Naive thymus-derived CD4-positive, alpha-beta T cell (primary cell): ENCODE measurements at regions of chr2 and their contacts with region 1.

Region 1: DNA sequence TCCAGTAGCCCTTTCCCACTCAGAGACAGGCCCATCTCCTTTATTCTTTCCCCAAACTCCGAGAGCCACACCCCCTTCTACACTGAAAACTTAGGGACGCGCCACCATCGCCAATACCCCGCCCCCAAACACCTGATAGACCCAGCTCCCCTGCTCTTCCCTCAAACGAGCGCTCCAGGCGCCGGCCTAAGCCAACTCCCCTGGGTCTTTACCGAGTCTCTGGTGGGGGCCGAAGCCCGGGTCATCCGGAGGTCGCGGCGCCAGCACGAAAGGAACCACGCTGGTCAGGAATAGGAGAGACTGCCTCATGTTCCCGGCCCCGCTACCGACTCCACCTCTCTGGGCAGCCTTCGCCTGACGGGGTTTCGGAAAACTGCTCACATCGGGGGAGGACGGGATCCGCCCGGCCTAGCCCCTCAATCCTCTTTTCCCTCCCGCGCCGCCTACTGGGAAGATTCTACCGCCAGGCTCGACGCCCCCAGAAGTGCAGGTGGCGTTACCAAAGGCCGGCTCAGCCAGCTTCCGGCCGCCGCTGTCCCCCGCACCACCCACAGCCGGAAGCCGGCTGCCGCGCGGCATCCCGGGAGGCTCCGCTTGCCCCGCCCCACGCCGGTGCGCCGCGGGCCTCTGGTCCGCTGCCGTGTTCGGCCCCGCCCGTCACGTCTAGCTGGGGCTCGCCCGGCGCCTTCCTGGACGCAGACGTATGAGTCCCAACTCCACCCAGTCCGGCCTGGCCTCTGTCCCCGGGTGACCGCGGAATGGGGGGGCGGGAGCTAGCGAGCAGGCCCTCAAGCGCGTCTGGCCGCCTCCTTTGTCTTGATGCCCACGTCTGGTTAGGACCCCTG is at the start of gene ADAM17:
- DNase-seq: peak; percentile 72 to 95 (median 80)
- ATAC-seq: peak; percentile 96
- H3K4me3 ChIP-seq: peak within 1 kb of the TSS; percentile 95
- H3K4me3 Mint-ChIP-seq: peak within 1 kb of the TSS; percentile 90 to 99 (median 96)
- H3K27ac ChIP-seq: peak within 1 kb of the TSS; percentile 97
- H3K27ac Mint-ChIP-seq: peak within 1 kb of the TSS; percentile 66 to 98 (median 96)
- H3K4me1 ChIP-seq: peaks cover 14 to 32% of the 10 kb centered on the region in 2 donors
- H3K4me1 Mint-ChIP-seq: peaks cover 35 to 63% (median 53%) of the 10 kb centered on the region in 7 donors
- H3K27me3 ChIP-seq: no peaks in the 10 kb centered on the region
- H3K27me3 Mint-ChIP-seq: no peaks in the 10 kb centered on the region
- total RNA-seq, gene ADAM17: 22.9 to 45.2 (median 25.9) TPM

Region 2: DNA sequence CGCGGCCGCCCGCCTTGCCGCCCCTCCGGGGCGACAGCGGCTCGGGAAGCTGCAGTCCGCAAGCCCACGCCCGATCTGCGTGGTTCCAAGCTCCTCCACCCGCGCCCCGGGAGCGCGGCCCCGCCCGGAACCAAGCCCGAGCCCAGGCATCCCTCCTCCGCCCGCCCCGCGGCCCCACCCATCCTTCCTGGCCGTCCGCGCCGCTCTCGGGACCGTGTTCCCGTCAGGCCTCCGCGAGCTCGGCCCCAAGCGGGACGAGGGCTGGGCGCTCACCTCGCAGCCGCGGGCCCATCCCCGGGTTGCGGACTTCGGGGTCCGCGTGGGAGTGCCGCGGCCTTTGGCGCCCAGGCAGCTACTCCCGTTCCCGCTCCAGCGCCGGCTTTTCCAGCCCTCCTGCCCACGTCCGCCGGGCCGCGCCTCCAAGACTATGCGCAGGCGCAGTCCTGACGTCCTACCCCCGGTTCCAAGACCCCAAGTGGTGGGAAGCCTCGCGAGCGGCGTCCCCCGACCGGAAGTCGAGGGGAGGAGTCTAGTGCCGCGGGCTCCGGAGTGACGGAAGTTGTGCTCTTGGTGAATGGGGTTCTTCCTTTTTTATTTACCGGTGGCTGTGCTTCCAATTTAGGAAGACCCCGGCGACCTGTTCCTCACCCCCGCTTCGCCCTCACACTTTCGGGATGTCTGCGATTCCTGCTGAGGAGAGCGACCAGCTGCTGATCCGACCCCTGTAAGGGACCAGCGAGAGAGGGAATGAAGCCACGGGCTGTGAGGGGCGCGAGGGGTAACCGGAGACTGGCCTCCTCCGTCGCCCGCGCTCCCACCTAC is 132.2 kb before region 1 on chr2 and contains the starts of genes CPSF3 and ITGB1BP1:
- CTCF ChIA-PET with region 1: no interaction called
- POLR2A ChIA-PET with region 1: interaction called, 11 read pairs
- intact Hi-C with region 1: loop called (anchors 1 kb)
- DNase-seq: peak; percentile 88 to 98 (median 94)
- ATAC-seq: peak; percentile 92
- H3K4me3 ChIP-seq: peak within 1 kb of the TSS; percentile 90
- H3K4me3 Mint-ChIP-seq: peak within 1 kb of the TSS in 5 of 10 donors; percentile 87 to 95 (median 92)
- H3K27ac ChIP-seq: peak within 1 kb of the TSS; percentile 84
- H3K27ac Mint-ChIP-seq: peak within 1 kb of the TSS in 8 of 9 donors; percentile 82 to 97 (median 92)
- H3K4me1 ChIP-seq: peaks cover 22 to 24% of the 10 kb centered on the region in 2 donors
- H3K4me1 Mint-ChIP-seq: peaks cover 20 to 41% (median 28%) of the 10 kb centered on the region in 7 donors
- H3K27me3 ChIP-seq: no peaks in the 10 kb centered on the region
- H3K27me3 Mint-ChIP-seq: no peaks in the 10 kb centered on the region
- total RNA-seq, gene CPSF3: 18.0 to 47.8 (median 21.7) TPM
- total RNA-seq, gene ITGB1BP1: 45.1 to 107 (median 54.3) TPM

Region 3: GRCh38 chr2:9594366-9595054 is 39.0 kb after region 1 on chr2:
- CTCF ChIA-PET with region 1: no interaction called
- POLR2A ChIA-PET with region 1: no interaction called
- intact Hi-C with region 1: loop called in 1 of 2 experiments (anchors 5 kb)
- DNase-seq: no peak
- ATAC-seq: peak; percentile 14
- H3K4me3 ChIP-seq: no peak overlapping the region
- H3K4me3 Mint-ChIP-seq: peak overlapping the region in 1 of 10 donors; percentile 54
- H3K27ac ChIP-seq: no peak overlapping the region
- H3K27ac Mint-ChIP-seq: peak overlapping the region in 5 of 9 donors; percentile 0 to 53 (median 23)
- H3K4me1 ChIP-seq: peaks cover 4 to 22% of the 10 kb centered on the region in 2 donors
- H3K4me1 Mint-ChIP-seq: peaks cover 24 to 56% (median 43%) of the 10 kb centered on the region in 7 donors
- H3K27me3 ChIP-seq: no peaks in the 10 kb centered on the region
- H3K27me3 Mint-ChIP-seq: no peaks in the 10 kb centered on the region

Region 4: GRCh38 chr2:9739531-9739964 is 184.0 kb after region 1 on chr2:
- CTCF ChIA-PET with region 1: no interaction called
- POLR2A ChIA-PET with region 1: interaction called, 6 read pairs
- intact Hi-C with region 1: loop called (anchors 1 to 5 kb)
- DNase-seq: peak in 7 of 9 donors; percentile 18 to 53 (median 36)
- ATAC-seq: peak; percentile 70
- H3K4me3 ChIP-seq: peak overlapping the region; percentile 45
- H3K4me3 Mint-ChIP-seq: peak overlapping the region; percentile 75 to 94 (median 86)
- H3K27ac ChIP-seq: peak overlapping the region; percentile 32
- H3K27ac Mint-ChIP-seq: peak overlapping the region; percentile 77 to 96 (median 92)
- H3K4me1 ChIP-seq: peaks cover 32 to 42% of the 10 kb centered on the region in 2 donors
- H3K4me1 Mint-ChIP-seq: peaks cover 32 to 58% (median 41%) of the 10 kb centered on the region in 7 donors
- H3K27me3 ChIP-seq: no peaks in the 10 kb centered on the region
- H3K27me3 Mint-ChIP-seq: peaks cover 0 to 5% (median 0%) of the 10 kb centered on the region in 5 donors

Region 5: GRCh38 chr2:9843229-9844035 is 287.9 kb after region 1 on chr2 and contains the start of gene TAF1B:
- CTCF ChIA-PET with region 1: no interaction called
- POLR2A ChIA-PET with region 1: interaction called, 4 read pairs
- intact Hi-C with region 1: loop called (anchors 2 kb)
- DNase-seq: peak; percentile 55 to 89 (median 80)
- ATAC-seq: peak; percentile 87
- H3K4me3 ChIP-seq: peak within 1 kb of the TSS; percentile 85
- H3K4me3 Mint-ChIP-seq: peak within 1 kb of the TSS; percentile 89 to 95 (median 93)
- H3K27ac ChIP-seq: peak within 1 kb of the TSS; percentile 72
- H3K27ac Mint-ChIP-seq: peak within 1 kb of the TSS; percentile 74 to 97 (median 92)
- H3K4me1 ChIP-seq: peaks cover 11 to 13% of the 10 kb centered on the region in 2 donors
- H3K4me1 Mint-ChIP-seq: peaks cover 25 to 56% (median 48%) of the 10 kb centered on the region in 7 donors
- H3K27me3 ChIP-seq: no peaks in the 10 kb centered on the region
- H3K27me3 Mint-ChIP-seq: peaks cover 0 to 6% (median 0%) of the 10 kb centered on the region in 5 donors
- total RNA-seq, gene TAF1B: 9.2 to 28.2 (median 20.9) TPM